CD4-positive, alpha-beta T cell (primary cell): ENCODE measurements at regions of chr11 and their contacts with region 1.

Region 1: GRCh38 chr11:81644239-81644840 is 1089.3 kb downstream of the FAM181B start:
- DNase-seq: peak in 3 of 14 experiments; percentile 43 to 48 (median 46)
- ATAC-seq: peak; percentile 66
- H3K4me3 ChIP-seq: no peak overlapping the region
- H3K4me3 Mint-ChIP-seq: no peak overlapping the region
- H3K27ac ChIP-seq: no peak overlapping the region
- H3K27ac Mint-ChIP-seq: no peak overlapping the region
- H3K4me1 ChIP-seq: no peaks in the 10 kb centered on the region
- H3K4me1 Mint-ChIP-seq: no peaks in the 10 kb centered on the region
- H3K27me3 ChIP-seq: peaks cover 0 to 3% of the 10 kb centered on the region in 2 experiments
- H3K27me3 Mint-ChIP-seq: peaks cover 21% of the 10 kb centered on the region
- CTCF ChIP-seq: peak; percentile 80

Region 2: DNA sequence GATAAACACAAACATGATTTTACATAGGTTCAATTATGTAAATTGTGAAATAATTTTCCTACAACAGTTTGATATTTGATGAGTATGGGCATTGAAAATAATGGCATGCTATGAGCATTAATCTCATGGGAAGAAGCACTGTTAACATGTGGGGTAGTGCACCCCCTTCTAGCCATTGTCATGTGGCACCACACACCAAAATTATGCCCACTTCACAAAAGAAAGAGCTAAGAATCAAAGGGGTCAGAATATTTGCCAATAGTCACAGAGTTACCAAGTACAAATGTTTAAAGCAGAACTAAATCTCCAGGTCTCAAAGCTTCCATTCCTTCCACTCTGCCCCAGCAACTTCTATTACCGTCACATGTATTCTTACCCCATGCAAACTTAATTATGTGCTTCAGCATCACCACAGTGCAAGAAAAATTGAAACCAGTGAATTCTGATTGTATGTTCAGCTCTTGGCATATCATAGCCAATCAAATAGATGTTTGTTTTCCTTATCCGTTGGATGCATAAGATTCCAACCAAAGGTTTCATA is 184.5 kb before region 1 on chr11:
- CTCF ChIA-PET with region 1: no interaction called
- POLR2A ChIA-PET with region 1: no interaction called
- intact Hi-C with region 1: no loop called
- DNase-seq: no peak
- ATAC-seq: no peak
- H3K4me3 ChIP-seq: no peak overlapping the region
- H3K4me3 Mint-ChIP-seq: no peak overlapping the region
- H3K27ac ChIP-seq: no peak overlapping the region
- H3K27ac Mint-ChIP-seq: no peak overlapping the region
- H3K4me1 ChIP-seq: no peaks in the 10 kb centered on the region
- H3K4me1 Mint-ChIP-seq: no peaks in the 10 kb centered on the region
- H3K27me3 ChIP-seq: no peaks in the 10 kb centered on the region
- H3K27me3 Mint-ChIP-seq: no peaks in the 10 kb centered on the region
- CTCF ChIP-seq: no peak

Region 3: GRCh38 chr11:81963018-81963417 is 318.7 kb after region 1 on chr11:
- CTCF ChIA-PET with region 1: no interaction called
- POLR2A ChIA-PET with region 1: no interaction called
- intact Hi-C with region 1: loop called in 1 of 2 experiments (anchors 5 kb)
- DNase-seq: peak in 3 of 14 experiments; percentile 23 to 37 (median 23)
- ATAC-seq: no peak
- H3K4me3 ChIP-seq: no peak overlapping the region
- H3K4me3 Mint-ChIP-seq: no peak overlapping the region
- H3K27ac ChIP-seq: no peak overlapping the region
- H3K27ac Mint-ChIP-seq: no peak overlapping the region
- H3K4me1 ChIP-seq: no peaks in the 10 kb centered on the region
- H3K4me1 Mint-ChIP-seq: peaks cover 17% of the 10 kb centered on the region
- H3K27me3 ChIP-seq: no peaks in the 10 kb centered on the region
- H3K27me3 Mint-ChIP-seq: no peaks in the 10 kb centered on the region
- CTCF ChIP-seq: peak; percentile 51

Region 4: DNA sequence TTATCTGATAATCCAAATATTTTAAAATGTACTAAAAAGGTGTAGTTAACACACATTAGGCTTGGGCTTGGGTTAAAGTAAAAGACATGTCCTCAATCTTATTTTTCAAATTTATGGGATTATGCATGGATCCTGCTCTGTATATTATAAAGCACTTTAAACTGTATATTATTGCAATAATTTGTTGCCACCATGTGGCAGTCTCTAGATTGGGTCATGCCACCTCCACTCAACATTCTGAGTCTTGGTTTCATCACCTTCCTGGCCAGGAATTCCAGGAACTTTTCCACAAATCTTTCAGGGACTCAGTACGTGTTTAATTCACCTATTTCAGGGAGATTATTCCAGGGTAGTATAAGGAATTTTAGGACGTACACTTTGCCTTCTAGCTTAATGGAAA is 393.8 kb after region 1 on chr11:
- CTCF ChIA-PET with region 1: no interaction called
- POLR2A ChIA-PET with region 1: no interaction called
- intact Hi-C with region 1: loop called in 1 of 2 experiments (anchors 5 kb)
- DNase-seq: no peak
- ATAC-seq: no peak
- H3K4me3 ChIP-seq: no peak overlapping the region
- H3K4me3 Mint-ChIP-seq: no peak overlapping the region
- H3K27ac ChIP-seq: no peak overlapping the region
- H3K27ac Mint-ChIP-seq: no peak overlapping the region
- H3K4me1 ChIP-seq: no peaks in the 10 kb centered on the region
- H3K4me1 Mint-ChIP-seq: no peaks in the 10 kb centered on the region
- H3K27me3 ChIP-seq: no peaks in the 10 kb centered on the region
- H3K27me3 Mint-ChIP-seq: no peaks in the 10 kb centered on the region
- CTCF ChIP-seq: no peak

Region 5: DNA sequence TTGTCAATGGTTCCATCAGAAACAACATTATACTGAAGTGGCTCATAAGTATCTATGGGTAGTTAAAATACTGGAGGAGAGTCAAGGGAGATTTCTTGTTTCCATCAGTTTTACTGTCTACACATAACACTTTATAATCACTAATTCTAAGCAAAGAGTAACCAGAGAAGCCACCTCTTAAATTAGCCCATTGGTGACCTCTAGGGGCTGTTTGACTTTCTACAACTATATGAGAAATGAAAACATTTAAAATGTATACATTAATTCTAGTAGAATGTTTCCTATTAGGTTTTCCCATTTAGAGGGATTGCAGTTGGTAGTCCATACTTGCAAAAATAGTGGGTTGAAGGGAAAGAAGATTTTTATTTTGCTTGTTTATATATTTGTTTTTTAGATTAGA is 585.0 kb after region 1 on chr11:
- CTCF ChIA-PET with region 1: no interaction called
- POLR2A ChIA-PET with region 1: no interaction called
- intact Hi-C with region 1: loop called (anchors 1 to 2 kb)
- DNase-seq: peak in 3 of 14 experiments; percentile 25 to 38 (median 28)
- ATAC-seq: no peak
- H3K4me3 ChIP-seq: no peak overlapping the region
- H3K4me3 Mint-ChIP-seq: no peak overlapping the region
- H3K27ac ChIP-seq: no peak overlapping the region
- H3K27ac Mint-ChIP-seq: no peak overlapping the region
- H3K4me1 ChIP-seq: no peaks in the 10 kb centered on the region
- H3K4me1 Mint-ChIP-seq: no peaks in the 10 kb centered on the region
- H3K27me3 ChIP-seq: no peaks in the 10 kb centered on the region
- H3K27me3 Mint-ChIP-seq: no peaks in the 10 kb centered on the region
- CTCF ChIP-seq: no peak

Region 6: GRCh38 chr11:82698576-82699352 is 1054.4 kb after region 1 on chr11:
- CTCF ChIA-PET with region 1: no interaction called
- POLR2A ChIA-PET with region 1: no interaction called
- intact Hi-C with region 1: loop called in 1 of 2 experiments (anchors 5 kb)
- DNase-seq: no peak
- ATAC-seq: no peak
- H3K4me3 ChIP-seq: no peak overlapping the region
- H3K4me3 Mint-ChIP-seq: no peak overlapping the region
- H3K27ac ChIP-seq: no peak overlapping the region
- H3K27ac Mint-ChIP-seq: no peak overlapping the region
- H3K4me1 ChIP-seq: no peaks in the 10 kb centered on the region
- H3K4me1 Mint-ChIP-seq: no peaks in the 10 kb centered on the region
- H3K27me3 ChIP-seq: peaks cover 0 to 4% of the 10 kb centered on the region in 2 experiments
- H3K27me3 Mint-ChIP-seq: peaks cover 8% of the 10 kb centered on the region
- CTCF ChIP-seq: no peak